CD4-positive, alpha-beta T cell (primary cell): ENCODE measurements at regions of chr12 and their contacts with region 1.

Region 1: GRCh38 chr12:30806989-30807694 is 52.4 kb upstream of the CAPRIN2 start:
- DNase-seq: peak in 5 of 14 experiments; percentile 9 to 76 (median 61)
- ATAC-seq: peak; percentile 60
- H3K4me3 ChIP-seq: no peak overlapping the region
- H3K4me3 Mint-ChIP-seq: no peak overlapping the region
- H3K27ac ChIP-seq: no peak overlapping the region
- H3K27ac Mint-ChIP-seq: no peak overlapping the region
- H3K4me1 ChIP-seq: peaks cover 4% of the 10 kb centered on the region
- H3K4me1 Mint-ChIP-seq: no peaks in the 10 kb centered on the region
- H3K27me3 ChIP-seq: no peaks in the 10 kb centered on the region
- H3K27me3 Mint-ChIP-seq: peaks cover 12% of the 10 kb centered on the region
- CTCF ChIP-seq: peak; percentile 86

Region 2: GRCh38 chr12:29309320-29309902 is 1497.7 kb before region 1 on chr12:
- CTCF ChIA-PET with region 1: no interaction called
- POLR2A ChIA-PET with region 1: no interaction called
- intact Hi-C with region 1: loop called in 1 of 2 experiments (anchors 1 kb)
- DNase-seq: peak in 3 of 14 experiments; percentile 7 to 14 (median 11)
- ATAC-seq: no peak
- H3K4me3 ChIP-seq: no peak overlapping the region
- H3K4me3 Mint-ChIP-seq: no peak overlapping the region
- H3K27ac ChIP-seq: no peak overlapping the region
- H3K27ac Mint-ChIP-seq: no peak overlapping the region
- H3K4me1 ChIP-seq: no peaks in the 10 kb centered on the region
- H3K4me1 Mint-ChIP-seq: no peaks in the 10 kb centered on the region
- H3K27me3 ChIP-seq: no peaks in the 10 kb centered on the region
- H3K27me3 Mint-ChIP-seq: no peaks in the 10 kb centered on the region
- CTCF ChIP-seq: peak; percentile 54

Region 3: DNA sequence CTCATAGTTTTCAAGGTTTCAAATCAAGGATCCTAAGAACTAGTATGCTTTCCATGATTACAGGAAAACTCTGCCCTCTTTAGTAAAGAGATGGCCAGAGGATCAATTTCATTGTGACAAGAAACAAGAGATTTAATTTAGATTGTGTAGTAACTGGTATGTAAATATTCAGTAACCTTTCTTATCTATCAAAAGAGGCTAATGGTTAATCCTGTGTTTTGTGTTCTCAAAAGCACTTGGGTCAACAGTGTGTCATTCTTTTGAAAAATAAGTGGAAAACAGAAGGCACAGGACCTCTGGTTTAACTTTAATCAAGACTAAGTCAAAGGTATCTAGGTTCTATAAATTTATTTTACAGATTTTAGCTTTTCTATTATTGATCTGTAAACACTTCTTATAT is 1369.6 kb before region 1 on chr12:
- CTCF ChIA-PET with region 1: no interaction called
- POLR2A ChIA-PET with region 1: no interaction called
- intact Hi-C with region 1: no loop called
- DNase-seq: no peak
- ATAC-seq: no peak
- H3K4me3 ChIP-seq: no peak overlapping the region
- H3K4me3 Mint-ChIP-seq: no peak overlapping the region
- H3K27ac ChIP-seq: no peak overlapping the region
- H3K27ac Mint-ChIP-seq: no peak overlapping the region
- H3K4me1 ChIP-seq: no peaks in the 10 kb centered on the region
- H3K4me1 Mint-ChIP-seq: no peaks in the 10 kb centered on the region
- H3K27me3 ChIP-seq: no peaks in the 10 kb centered on the region
- H3K27me3 Mint-ChIP-seq: peaks cover 39% of the 10 kb centered on the region
- CTCF ChIP-seq: no peak

Region 4: DNA sequence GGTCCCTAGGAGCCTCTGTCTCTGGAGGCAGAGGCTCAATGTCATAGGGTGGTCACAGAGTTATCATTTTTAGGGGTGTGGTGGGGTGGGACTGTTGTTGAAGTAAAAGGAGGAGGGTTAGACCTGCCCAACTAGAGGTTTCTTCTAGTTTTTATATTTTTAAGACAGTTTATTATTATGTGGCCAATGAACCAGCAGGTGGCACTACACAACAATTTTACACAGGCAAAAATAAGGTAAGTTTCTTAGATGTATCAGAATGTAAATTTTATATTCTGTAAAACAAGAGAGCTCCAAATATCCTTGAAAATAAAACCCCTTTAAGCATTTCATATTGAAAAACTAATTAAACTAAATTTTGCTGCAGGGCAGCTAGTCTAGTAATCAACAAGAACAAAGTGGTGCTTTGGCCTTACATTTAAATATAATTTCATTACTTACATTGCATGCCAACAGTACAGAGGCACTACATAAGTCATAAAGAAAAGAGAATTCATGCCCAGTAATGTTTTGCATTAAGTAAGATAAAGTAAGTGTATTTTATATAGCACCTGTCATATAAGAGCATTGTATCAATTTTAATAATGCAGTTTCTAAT is 1287.5 kb before region 1 on chr12:
- CTCF ChIA-PET with region 1: no interaction called
- POLR2A ChIA-PET with region 1: no interaction called
- intact Hi-C with region 1: loop called (anchors 1 kb)
- DNase-seq: peak in 5 of 14 experiments; percentile 1 to 58 (median 39)
- ATAC-seq: no peak
- H3K4me3 ChIP-seq: no peak overlapping the region
- H3K4me3 Mint-ChIP-seq: no peak overlapping the region
- H3K27ac ChIP-seq: no peak overlapping the region
- H3K27ac Mint-ChIP-seq: no peak overlapping the region
- H3K4me1 ChIP-seq: no peaks in the 10 kb centered on the region
- H3K4me1 Mint-ChIP-seq: no peaks in the 10 kb centered on the region
- H3K27me3 ChIP-seq: peaks cover 0 to 3% of the 10 kb centered on the region in 2 experiments
- H3K27me3 Mint-ChIP-seq: peaks cover 15% of the 10 kb centered on the region
- CTCF ChIP-seq: peak; percentile 72

Region 5: GRCh38 chr12:29552324-29552927 is 1254.7 kb before region 1 on chr12:
- CTCF ChIA-PET with region 1: no interaction called
- POLR2A ChIA-PET with region 1: no interaction called
- intact Hi-C with region 1: loop called (anchors 1 to 2 kb)
- DNase-seq: peak; percentile 37 to 71 (median 48)
- ATAC-seq: peak; percentile 54
- H3K4me3 ChIP-seq: no peak overlapping the region
- H3K4me3 Mint-ChIP-seq: no peak overlapping the region
- H3K27ac ChIP-seq: no peak overlapping the region
- H3K27ac Mint-ChIP-seq: no peak overlapping the region
- H3K4me1 ChIP-seq: no peaks in the 10 kb centered on the region
- H3K4me1 Mint-ChIP-seq: no peaks in the 10 kb centered on the region
- H3K27me3 ChIP-seq: no peaks in the 10 kb centered on the region
- H3K27me3 Mint-ChIP-seq: peaks cover 9% of the 10 kb centered on the region
- CTCF ChIP-seq: peak; percentile 84

Region 6: DNA sequence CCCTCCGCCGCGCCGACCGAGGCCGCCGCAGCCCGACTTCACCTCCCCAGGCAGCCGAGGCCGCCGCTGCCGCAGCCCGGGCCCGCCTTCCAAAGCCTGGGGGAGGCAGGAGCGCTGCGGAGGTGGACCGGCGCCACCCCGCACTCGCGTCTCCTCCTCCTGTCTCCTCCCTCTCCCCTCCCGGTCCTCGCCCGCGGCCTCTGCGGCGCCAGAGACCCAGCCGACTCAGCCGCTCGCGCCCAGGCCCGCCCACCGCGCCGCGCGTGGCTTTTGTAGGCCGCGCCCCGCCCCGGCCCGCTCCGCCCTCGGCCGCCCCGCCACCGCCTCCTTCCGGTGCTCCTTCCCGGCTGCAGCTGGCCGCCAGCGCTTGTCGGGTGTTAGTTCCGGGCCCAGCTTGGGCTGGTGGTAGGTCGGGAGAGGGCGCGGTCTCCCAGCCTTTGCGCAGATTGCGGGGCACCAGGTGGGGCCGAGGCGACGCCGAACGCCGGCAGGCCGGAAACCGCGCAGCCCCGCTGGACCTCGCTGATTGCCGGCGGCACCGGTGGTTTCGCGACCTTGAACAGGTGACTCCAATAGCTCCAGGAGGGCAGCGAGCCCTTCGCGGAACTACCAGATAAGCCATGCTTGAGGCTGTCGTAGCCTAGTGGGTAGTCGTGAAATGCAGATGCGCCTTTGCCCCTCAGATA is 52.3 kb before region 1 on chr12 and contains the start of gene CAPRIN2:
- CTCF ChIA-PET with region 1: no interaction called
- POLR2A ChIA-PET with region 1: no interaction called
- intact Hi-C with region 1: loop called (anchors 2 kb)
- DNase-seq: peak; percentile 86 to 97 (median 94)
- ATAC-seq: peak; percentile 90
- H3K4me3 ChIP-seq: peak within 1 kb of the TSS; percentile 81
- H3K4me3 Mint-ChIP-seq: peak within 1 kb of the TSS; percentile 94
- H3K27ac ChIP-seq: peak within 1 kb of the TSS; percentile 51 to 76
- H3K27ac Mint-ChIP-seq: peak within 1 kb of the TSS; percentile 77
- H3K4me1 ChIP-seq: peaks cover 16% of the 10 kb centered on the region
- H3K4me1 Mint-ChIP-seq: peaks cover 45% of the 10 kb centered on the region
- H3K27me3 ChIP-seq: no peaks in the 10 kb centered on the region
- H3K27me3 Mint-ChIP-seq: no peaks in the 10 kb centered on the region
- CTCF ChIP-seq: peak; percentile 18
- total RNA-seq, gene CAPRIN2: 21.2 to 24.6 TPM